Dendritic cell treated with granulocyte-macrophage colony-stimulating factor and Interleukin-4, amounts not matched to agents 40 ng/mL and 50 ng/mL, for 4 days (primary cell): ENCODE measurements at regions of chr3 and their contacts with region 1.

Region 1: GRCh38 chr3:47282424-47283192 is at the starts of genes KIF9 and KLHL18:
- H3K4me3 Mint-ChIP-seq: peak within 1 kb of the TSS; percentile 98
- H3K27ac Mint-ChIP-seq: peak within 1 kb of the TSS; percentile 93
- H3K4me1 Mint-ChIP-seq: peaks cover 55% of the 10 kb centered on the region
- H3K27me3 Mint-ChIP-seq: no peaks in the 10 kb centered on the region

Region 2: GRCh38 chr3:47315069-47315647 is 32.5 kb after region 1 on chr3:
- intact Hi-C with region 1: loop called (anchors 2 kb)
- H3K4me3 Mint-ChIP-seq: peak overlapping the region; percentile 37
- H3K27ac Mint-ChIP-seq: peak overlapping the region; percentile 75
- H3K4me1 Mint-ChIP-seq: peaks cover 73% of the 10 kb centered on the region
- H3K27me3 Mint-ChIP-seq: no peaks in the 10 kb centered on the region

Region 3: DNA sequence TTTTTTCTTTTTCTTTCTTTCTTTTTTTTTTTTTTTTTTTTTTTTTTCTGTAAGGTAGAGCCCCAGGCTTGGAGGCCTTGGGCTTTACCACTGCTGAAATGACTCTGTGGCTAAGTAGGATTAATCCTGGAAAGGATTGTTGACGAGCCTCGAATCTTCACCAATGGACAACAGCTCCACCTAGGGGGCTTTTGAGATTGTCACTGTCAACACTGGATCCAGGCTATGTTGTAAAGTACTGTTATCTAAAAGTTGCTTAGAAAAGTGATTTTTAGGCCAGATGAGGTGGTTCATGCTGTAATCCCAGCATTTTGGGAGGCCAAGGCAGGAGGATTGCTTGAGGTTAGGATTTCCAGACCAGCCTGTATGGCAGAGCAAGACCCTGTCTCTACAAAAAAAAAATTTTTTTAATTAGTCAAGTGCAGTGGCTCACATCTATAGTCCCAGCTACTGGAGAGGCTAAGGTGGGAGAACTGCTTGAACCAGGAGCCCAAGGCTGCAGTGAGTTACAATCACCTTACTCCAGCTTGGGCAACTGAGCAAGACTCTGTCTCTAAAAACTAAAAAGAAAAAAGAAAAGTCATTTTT is 41.8 kb after region 1 on chr3:
- intact Hi-C with region 1: loop called (anchors 2 kb)
- H3K4me3 Mint-ChIP-seq: no peak overlapping the region
- H3K27ac Mint-ChIP-seq: no peak overlapping the region
- H3K4me1 Mint-ChIP-seq: peaks cover 11% of the 10 kb centered on the region
- H3K27me3 Mint-ChIP-seq: no peaks in the 10 kb centered on the region

Region 4: GRCh38 chr3:47422421-47423142 is 140.0 kb after region 1 on chr3:
- intact Hi-C with region 1: no loop called
- H3K4me3 Mint-ChIP-seq: no peak overlapping the region
- H3K27ac Mint-ChIP-seq: peak overlapping the region; percentile 89
- H3K4me1 Mint-ChIP-seq: peaks cover 24% of the 10 kb centered on the region
- H3K27me3 Mint-ChIP-seq: no peaks in the 10 kb centered on the region

Region 5: GRCh38 chr3:47705391-47705790 is 422.8 kb after region 1 on chr3:
- intact Hi-C with region 1: no loop called
- H3K4me3 Mint-ChIP-seq: no peak overlapping the region
- H3K27ac Mint-ChIP-seq: no peak overlapping the region
- H3K4me1 Mint-ChIP-seq: no peaks in the 10 kb centered on the region
- H3K27me3 Mint-ChIP-seq: no peaks in the 10 kb centered on the region